ENCODE measurements at regions of chr17 and their contacts with region 1.

Region 1: DNA sequence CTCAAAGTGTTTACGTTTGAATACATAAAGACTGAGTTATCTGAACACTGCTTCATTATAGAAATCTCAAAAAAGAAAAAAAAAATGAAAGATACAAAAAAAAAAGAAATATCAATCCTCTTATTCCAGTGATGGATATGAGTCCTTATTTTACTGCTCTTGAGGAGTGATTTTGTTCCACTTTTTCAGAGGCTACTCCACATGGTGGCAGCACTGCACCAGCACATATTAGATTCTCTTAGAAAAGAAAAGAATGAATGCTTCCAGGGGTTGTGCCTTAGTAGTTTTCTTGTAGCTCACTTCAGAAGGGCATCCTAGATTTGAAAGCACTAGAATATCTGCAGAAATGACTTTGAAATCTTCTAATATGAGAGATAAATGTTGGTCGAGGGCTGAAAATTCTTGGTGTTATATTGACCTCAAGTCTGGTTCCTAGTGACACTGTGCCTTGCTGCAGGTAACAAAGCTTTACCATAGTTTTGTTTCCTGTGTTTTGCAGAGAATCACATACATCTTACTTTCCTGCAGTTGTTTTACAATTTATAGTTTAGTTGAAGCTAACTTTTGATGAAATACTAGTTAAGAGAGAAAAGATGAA is 25.9 kb downstream of the AP2B1 start:
- DNase-seq: peak in 1 of 2 experiments; percentile 68
- ATAC-seq: peak; percentile 84 to 92; a peak in 5 of 6 replicates
- H3K4me3 ChIP-seq: no peak overlapping the region
- H3K27ac ChIP-seq: no peak overlapping the region
- H3K4me1 ChIP-seq: peaks cover 6% of the 10 kb centered on the region; the same call in 2 of the 3 replicates
- CTCF ChIP-seq: peak; percentile 91
- EP300 ChIP-seq: no peak
- POLR2A ChIP-seq: no peak
- RAD21 ChIP-seq: peak; percentile 72 to 76

Region 2: GRCh38 chr17:35540589-35541404 is 72.2 kb before region 1 on chr17:
- CTCF ChIA-PET with region 1: no interaction called
- POLR2A ChIA-PET with region 1: no interaction called
- DNase-seq: no peak
- ATAC-seq: peak; percentile 25 to 42; a peak in 3 of 6 replicates
- H3K4me3 ChIP-seq: 0 out of 3 replicates have a peak overlapping the region, but pooled peaks have one; percentile 5
- H3K27ac ChIP-seq: peak overlapping the region; percentile 26 to 56; a peak in 5 of 6 replicates
- H3K4me1 ChIP-seq: no peaks in the 10 kb centered on the region
- CTCF ChIP-seq: no peak
- EP300 ChIP-seq: no peak
- POLR2A ChIP-seq: no peak
- RAD21 ChIP-seq: no peak

Region 3: DNA sequence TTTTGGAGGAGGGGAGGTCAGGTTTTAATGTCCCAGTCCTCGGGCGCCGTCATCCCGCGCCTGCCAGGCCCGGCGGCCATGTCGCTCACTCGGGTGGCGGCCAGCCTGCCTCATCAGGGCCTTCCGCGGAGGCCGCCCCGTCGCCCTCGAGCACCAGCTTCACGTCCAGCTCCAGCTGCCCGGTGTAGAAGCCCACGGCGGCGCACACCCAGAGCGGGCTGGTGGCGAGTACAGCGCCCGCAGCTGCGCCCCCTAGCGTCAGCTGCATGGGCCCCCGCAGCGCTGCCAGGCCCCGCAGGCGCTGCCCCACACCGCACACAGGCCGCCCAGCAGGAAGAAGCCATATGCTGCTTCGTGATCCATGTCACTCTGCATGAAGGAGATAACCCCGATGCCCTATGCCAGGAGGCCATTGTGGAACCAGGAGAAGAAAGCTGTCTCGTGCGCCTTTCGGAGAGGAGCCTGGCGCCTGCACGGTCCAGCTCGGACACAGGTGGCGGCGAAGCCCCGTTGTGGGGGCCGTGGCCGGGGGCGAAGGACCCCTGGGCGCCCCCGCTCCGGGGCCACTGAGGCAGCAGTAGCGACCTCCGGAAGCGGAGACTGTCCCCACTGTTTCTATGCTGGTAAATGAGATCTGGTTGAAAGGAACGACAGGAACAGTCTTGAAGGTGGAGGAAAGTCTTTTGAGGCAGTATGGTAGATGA is 16.3 kb before region 1 on chr17:
- CTCF ChIA-PET with region 1: interaction called, 44 read pairs
- POLR2A ChIA-PET with region 1: no interaction called
- DNase-seq: no peak
- ATAC-seq: peak; percentile 24 to 67; a peak in 4 of 6 replicates
- H3K4me3 ChIP-seq: no peak overlapping the region
- H3K27ac ChIP-seq: no peak overlapping the region
- H3K4me1 ChIP-seq: peaks cover 5% of the 10 kb centered on the region; the same call in 2 of the 3 replicates
- CTCF ChIP-seq: no peak
- EP300 ChIP-seq: no peak
- POLR2A ChIP-seq: no peak
- RAD21 ChIP-seq: no peak

Region 4: GRCh38 chr17:35641032-35641431 is 28.0 kb after region 1 on chr17:
- CTCF ChIA-PET with region 1: interaction called, 12 read pairs
- POLR2A ChIA-PET with region 1: no interaction called
- DNase-seq: no peak
- ATAC-seq: no peak
- H3K4me3 ChIP-seq: no peak overlapping the region
- H3K27ac ChIP-seq: no peak overlapping the region
- H3K4me1 ChIP-seq: no peaks in the 10 kb centered on the region
- CTCF ChIP-seq: no peak
- EP300 ChIP-seq: no peak
- POLR2A ChIP-seq: no peak
- RAD21 ChIP-seq: no peak

Region 5: DNA sequence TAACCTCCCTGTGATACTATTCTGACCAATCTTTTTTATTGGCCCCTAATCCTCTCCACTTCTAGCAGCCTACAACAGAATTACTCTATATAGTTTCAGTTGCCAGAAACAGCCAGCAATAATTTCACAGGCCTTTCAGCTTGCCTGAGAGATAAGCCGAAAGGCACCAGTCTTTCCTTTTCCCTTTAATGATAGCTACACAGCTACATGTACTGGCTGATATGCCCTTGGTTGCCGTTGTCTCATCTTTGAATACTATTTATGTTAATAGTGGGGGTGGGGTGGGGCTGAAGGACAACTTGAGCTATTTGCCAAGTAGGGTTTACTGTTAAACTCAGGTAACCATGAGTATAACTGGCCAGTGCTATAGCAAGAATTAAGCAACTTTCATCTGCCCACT is 82.6 kb after region 1 on chr17:
- CTCF ChIA-PET with region 1: interaction called, 10 read pairs
- POLR2A ChIA-PET with region 1: no interaction called
- DNase-seq: no peak
- ATAC-seq: no peak
- H3K4me3 ChIP-seq: no peak overlapping the region
- H3K27ac ChIP-seq: no peak overlapping the region
- H3K4me1 ChIP-seq: no peaks in the 10 kb centered on the region
- CTCF ChIP-seq: no peak
- EP300 ChIP-seq: no peak
- POLR2A ChIP-seq: no peak
- RAD21 ChIP-seq: no peak

Region 6: GRCh38 chr17:35731239-35731931 is 118.4 kb after region 1 on chr17 and contains the start of gene RASL10B:
- CTCF ChIA-PET with region 1: interaction called, 12 read pairs
- POLR2A ChIA-PET with region 1: no interaction called
- DNase-seq: no peak
- ATAC-seq: peak; percentile 37 to 59; a peak in 4 of 6 replicates
- H3K4me3 ChIP-seq: peak within 1 kb of the TSS; percentile 43
- H3K27ac ChIP-seq: peak within 1 kb of the TSS; percentile 31 to 82; a peak in 4 of 6 replicates
- H3K4me1 ChIP-seq: no peaks in the 10 kb centered on the region
- CTCF ChIP-seq: no peak
- EP300 ChIP-seq: no peak
- POLR2A ChIP-seq: no peak
- RAD21 ChIP-seq: no peak
- polyA plus RNA-seq, gene RASL10B: 0.05 and 0.07 TPM in 2 replicates

Region 7: GRCh38 chr17:35808962-35809854 is 196.2 kb after region 1 on chr17 and contains the start of gene TAF15:
- CTCF ChIA-PET with region 1: interaction called, 15 read pairs
- POLR2A ChIA-PET with region 1: interaction called, 6 read pairs
- DNase-seq: peak; percentile 95 to 99
- ATAC-seq: peak; percentile 91 to 96
- H3K4me3 ChIP-seq: peak within 1 kb of the TSS; percentile 58
- H3K27ac ChIP-seq: peak within 1 kb of the TSS; percentile 86 to 97
- H3K4me1 ChIP-seq: peaks cover 34% of the 10 kb centered on the region
- CTCF ChIP-seq: peak; percentile 82
- EP300 ChIP-seq: no peak
- POLR2A ChIP-seq: peak; percentile 98
- RAD21 ChIP-seq: peak; percentile 47 to 61; a peak in 3 of 5 replicates
- polyA plus RNA-seq, gene TAF15: 130 and 213 TPM in 2 replicates

Measured in A549 (cell line).